Mammary epithelial cell (primary cell): ENCODE measurements at regions of chr15 and their contacts with region 1.

Region 1: GRCh38 chr15:31516874-31517273 is 190.2 kb downstream of the KLF13 start:
- DNase-seq: no peak
- H3K4me3 ChIP-seq: no peak overlapping the region
- H3K27ac ChIP-seq: no peak overlapping the region
- H3K4me1 ChIP-seq: no peaks in the 10 kb centered on the region
- H3K27me3 ChIP-seq: peaks cover 1% of the 10 kb centered on the region
- CTCF ChIP-seq: no peak

Region 2: DNA sequence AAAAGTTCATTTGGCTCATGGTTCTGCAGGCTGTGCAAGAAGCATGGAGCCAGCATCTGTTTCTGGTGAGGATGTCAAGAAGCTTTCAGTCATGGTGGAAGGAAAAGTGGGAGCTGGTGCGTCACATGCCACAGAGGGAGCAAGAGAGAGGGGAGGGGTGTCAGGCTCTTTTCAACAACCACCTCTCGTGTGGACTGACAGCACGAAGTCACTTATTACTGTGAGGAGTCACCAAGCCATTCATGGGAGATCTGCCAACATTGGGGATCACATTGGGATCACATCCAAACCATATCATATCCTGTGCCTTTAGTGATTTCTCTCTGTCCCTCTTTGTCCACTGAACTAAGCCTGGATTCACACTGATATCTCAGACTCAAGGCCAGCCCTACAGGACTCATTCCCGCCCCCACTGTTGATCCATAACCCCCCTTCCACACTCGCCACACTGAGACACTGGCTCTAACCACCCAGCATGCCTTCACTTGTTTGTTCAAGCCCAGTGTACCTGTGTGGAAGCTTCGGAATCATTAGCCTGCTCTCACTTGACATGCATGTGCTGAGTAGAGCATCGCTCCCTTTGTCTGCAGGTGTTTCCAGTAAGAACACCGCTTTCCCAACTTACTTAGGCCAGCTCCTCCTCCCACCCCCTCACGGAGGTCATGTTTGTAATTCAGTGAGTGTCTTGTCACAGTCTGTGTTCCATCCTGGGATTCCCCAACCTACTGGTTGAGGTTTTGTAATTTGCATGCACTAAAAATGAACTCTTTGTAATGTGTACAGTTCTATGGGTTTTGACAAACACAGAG is 58.1 kb before region 1 on chr15:
- CTCF ChIA-PET with region 1: no interaction called
- dilution Hi-C with region 1: no loop called
- in situ Hi-C with region 1: no loop called
- intact Hi-C with region 1: no loop called
- DNase-seq: peak; percentile 87
- H3K4me3 ChIP-seq: no peak overlapping the region
- H3K27ac ChIP-seq: no peak overlapping the region
- H3K4me1 ChIP-seq: peaks cover 31% of the 10 kb centered on the region
- H3K27me3 ChIP-seq: no peaks in the 10 kb centered on the region
- CTCF ChIP-seq: no peak

Region 3: DNA sequence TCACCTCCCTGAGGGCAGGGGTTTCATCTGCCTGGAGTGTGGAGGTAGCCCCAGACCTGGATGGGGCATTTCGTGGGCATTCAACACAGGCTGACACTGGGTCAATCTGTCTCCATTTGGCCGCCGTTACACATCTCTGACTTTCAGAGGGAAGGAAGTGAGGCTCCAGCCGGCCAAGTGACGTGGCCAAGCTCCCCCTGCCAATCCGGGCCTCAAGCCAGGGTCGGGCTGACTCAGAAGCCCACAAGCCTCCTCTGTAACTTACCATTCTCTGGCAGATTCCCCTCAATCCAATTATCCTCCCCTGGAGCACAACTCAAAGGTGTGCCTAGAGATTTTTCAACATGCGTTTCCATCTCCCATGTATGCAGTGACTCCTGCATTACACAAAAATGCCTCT is 37.4 kb after region 1 on chr15:
- CTCF ChIA-PET with region 1: no interaction called
- dilution Hi-C with region 1: loop called (anchors 5 kb)
- in situ Hi-C with region 1: no loop called
- intact Hi-C with region 1: no loop called
- DNase-seq: no peak
- H3K4me3 ChIP-seq: no peak overlapping the region
- H3K27ac ChIP-seq: no peak overlapping the region
- H3K4me1 ChIP-seq: no peaks in the 10 kb centered on the region
- H3K27me3 ChIP-seq: no peaks in the 10 kb centered on the region
- CTCF ChIP-seq: no peak